Activated naive CD8-positive, alpha-beta T cell treated with anti-CD3 and anti-CD28 coated beads, Interleukin-2, amount 10 ng/mL, durations not matched to agents 7 days and 5 days (primary cell): ENCODE measurements at regions of chr16 and their contacts with region 1.

Region 1: GRCh38 chr16:1533443-1533951 is at the start of gene TMEM204:
- DNase-seq: peak; percentile 72
- ATAC-seq: peak; percentile 47
- H3K4me3 Mint-ChIP-seq: peak within 1 kb of the TSS; percentile 97
- H3K27ac Mint-ChIP-seq: peak within 1 kb of the TSS; percentile 93
- H3K4me1 Mint-ChIP-seq: peaks cover 37% of the 10 kb centered on the region
- H3K27me3 Mint-ChIP-seq: no peaks in the 10 kb centered on the region
- total RNA-seq, gene TMEM204: 68.3 to 72.0 TPM

Region 2: DNA sequence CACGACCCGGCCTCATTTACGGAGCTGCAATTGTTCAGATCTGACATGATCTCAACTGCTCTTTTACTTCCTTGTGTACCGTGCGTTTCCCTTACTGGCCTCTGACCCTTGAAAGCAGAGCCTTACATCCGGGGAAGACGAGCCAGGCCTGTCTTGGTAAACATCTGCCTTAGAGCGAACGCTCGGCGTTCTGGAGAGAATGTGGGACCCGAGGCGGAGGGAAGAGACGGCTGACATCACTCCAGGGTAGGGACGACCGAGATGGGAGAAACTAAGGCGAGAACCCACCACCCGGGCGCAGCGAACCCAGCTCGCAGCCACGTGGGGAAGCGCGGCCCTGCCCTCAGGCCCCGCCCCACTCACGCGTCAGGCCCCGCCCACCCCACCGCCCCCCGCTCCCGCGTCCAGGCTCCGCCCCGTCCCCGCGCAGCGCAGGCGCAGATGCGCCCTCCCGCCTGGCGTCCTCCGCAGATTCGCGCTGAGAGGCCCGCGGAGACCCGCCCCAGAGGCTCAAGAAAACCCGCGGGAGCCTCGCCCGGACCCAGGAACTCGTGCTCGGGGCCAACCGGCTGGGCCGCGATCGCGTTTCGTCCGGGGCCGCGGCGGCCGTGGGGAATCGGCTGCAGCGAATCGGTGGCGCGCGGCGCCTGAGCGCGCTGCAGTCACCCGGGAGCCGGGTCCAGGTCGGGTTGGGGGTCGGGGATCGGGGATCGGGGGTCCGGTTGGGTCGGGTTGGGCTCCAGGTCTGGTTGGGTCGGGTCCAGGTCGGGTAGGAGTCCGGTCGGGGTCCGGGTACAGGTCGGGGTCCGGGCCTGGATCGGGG is 40.4 kb before region 1 on chr16 and contains the start of gene TELO2:
- POLR2A ChIA-PET with region 1: interaction called, 11 read pairs
- DNase-seq: peak; percentile 95
- ATAC-seq: peak; percentile 86
- H3K4me3 Mint-ChIP-seq: peak within 1 kb of the TSS; percentile 94
- H3K27ac Mint-ChIP-seq: peak within 1 kb of the TSS; percentile 98
- H3K4me1 Mint-ChIP-seq: peaks cover 8% of the 10 kb centered on the region
- H3K27me3 Mint-ChIP-seq: no peaks in the 10 kb centered on the region
- total RNA-seq, gene TELO2: 53.9 to 57.1 TPM

Region 3: GRCh38 chr16:1579201-1579600 is 45.7 kb after region 1 on chr16:
- POLR2A ChIA-PET with region 1: no interaction called
- DNase-seq: no peak
- ATAC-seq: peak; percentile 68
- H3K4me3 Mint-ChIP-seq: no peak overlapping the region
- H3K27ac Mint-ChIP-seq: no peak overlapping the region
- H3K4me1 Mint-ChIP-seq: peaks cover 6% of the 10 kb centered on the region
- H3K27me3 Mint-ChIP-seq: no peaks in the 10 kb centered on the region

Region 4: GRCh38 chr16:1610276-1611017 is 77.0 kb after region 1 on chr16:
- POLR2A ChIA-PET with region 1: interaction called, 16 read pairs
- DNase-seq: peak; percentile 95
- ATAC-seq: peak; percentile 48
- H3K4me3 Mint-ChIP-seq: peak overlapping the region; percentile 88
- H3K27ac Mint-ChIP-seq: peak overlapping the region; percentile 96
- H3K4me1 Mint-ChIP-seq: peaks cover 11% of the 10 kb centered on the region
- H3K27me3 Mint-ChIP-seq: no peaks in the 10 kb centered on the region